PC-9 (cell line): ENCODE measurements at regions of chr1 and their contacts with region 1.

Region 1: DNA sequence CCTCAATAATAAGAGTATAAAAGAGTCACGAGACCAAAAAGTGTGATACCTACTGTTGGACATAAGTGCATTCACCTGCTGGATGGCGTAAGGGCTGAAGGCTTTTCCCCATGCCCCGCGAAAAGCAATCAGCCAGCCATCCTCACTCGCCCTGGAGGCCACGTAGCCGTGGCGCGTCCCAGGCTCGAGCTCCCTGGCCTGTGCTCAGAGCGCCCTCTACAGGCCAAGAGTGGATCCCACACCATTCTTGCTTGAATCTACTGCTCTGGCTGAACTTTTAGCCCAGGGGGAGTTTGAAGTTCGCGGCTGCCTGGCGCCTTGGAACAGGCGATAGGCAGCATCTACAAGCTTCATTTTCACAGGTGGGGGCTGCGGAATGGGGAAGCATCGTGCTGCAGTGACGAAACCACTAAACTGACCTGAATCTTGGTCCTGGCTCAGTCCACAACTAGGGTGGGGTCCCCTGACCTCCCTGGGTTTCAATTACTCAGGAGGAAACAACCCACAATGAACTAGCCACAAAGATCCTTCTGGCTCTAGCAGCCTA is 70.3 kb upstream of the SERBP1 start:
- DNase-seq: peak; percentile 74 to 89
- H3K4me3 ChIP-seq: no peak overlapping the region; the same call in 1 of the 2 replicates
- H3K27ac ChIP-seq: no peak overlapping the region
- H3K4me1 ChIP-seq: no peaks in the 10 kb centered on the region
- H3K27me3 ChIP-seq: no peaks in the 10 kb centered on the region
- CTCF ChIP-seq: peak; percentile 96

Region 2: DNA sequence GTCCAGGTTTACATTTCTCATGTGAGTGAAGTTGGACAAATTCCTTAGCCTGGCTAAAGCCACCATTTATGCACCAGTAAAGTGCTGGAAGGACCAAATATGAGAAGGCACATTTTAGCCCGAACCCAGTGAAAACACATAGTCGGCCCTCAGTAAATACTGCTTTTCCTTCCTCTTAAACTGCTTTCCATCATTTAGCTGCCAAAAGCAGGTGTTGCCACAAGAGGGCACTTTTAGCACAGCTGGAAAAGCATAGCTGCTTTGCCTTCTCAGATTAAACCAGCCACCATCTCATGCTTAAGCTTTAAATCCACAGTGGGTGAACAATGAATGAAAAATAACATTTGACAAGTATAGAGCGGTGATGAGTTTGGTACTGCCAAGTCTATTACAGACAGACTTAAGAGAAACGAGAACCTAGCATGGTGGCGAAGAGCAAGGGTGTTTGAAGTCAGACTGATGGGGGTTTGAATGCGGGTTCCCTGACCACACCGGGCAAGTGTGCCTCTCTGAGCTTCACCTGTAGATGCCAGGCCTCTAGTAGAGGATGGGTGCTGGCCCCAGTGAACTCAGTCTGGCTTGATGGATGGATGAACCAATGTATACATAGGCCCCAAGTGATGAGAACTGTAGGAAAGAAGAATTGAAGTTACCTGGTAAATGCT is 504.3 kb before region 1 on chr1:
- CTCF ChIA-PET with region 1: interaction called, 6 read pairs
- POLR2A ChIA-PET with region 1: no interaction called
- intact Hi-C with region 1: loop called (anchors 1 kb)
- DNase-seq: peak; percentile 49 to 53
- H3K4me3 ChIP-seq: no peak overlapping the region
- H3K27ac ChIP-seq: no peak overlapping the region
- H3K4me1 ChIP-seq: no peaks in the 10 kb centered on the region
- H3K27me3 ChIP-seq: no peaks in the 10 kb centered on the region
- CTCF ChIP-seq: peak; percentile 83

Region 3: DNA sequence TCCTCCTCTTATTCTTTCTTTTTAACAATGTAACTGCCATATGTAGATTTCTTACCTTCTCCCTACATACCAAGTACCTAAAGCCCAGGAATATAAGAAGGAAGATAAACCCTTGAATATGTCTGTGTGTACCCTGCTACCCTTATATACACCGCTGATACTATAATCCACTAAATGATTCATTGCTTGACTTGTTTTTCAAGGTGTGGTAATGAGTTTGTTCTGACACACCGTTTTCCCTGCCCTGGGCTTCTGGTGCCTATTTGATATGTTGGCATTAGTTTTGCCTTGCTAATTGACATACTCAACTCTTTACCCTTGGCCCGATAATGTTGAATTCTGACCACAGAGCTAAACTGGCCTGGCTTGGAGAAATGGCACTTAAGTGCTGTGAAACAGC is 269.9 kb before region 1 on chr1:
- CTCF ChIA-PET with region 1: interaction called, 3 read pairs
- POLR2A ChIA-PET with region 1: no interaction called
- intact Hi-C with region 1: loop called (anchors 1 kb)
- DNase-seq: peak; percentile 6 to 84
- H3K4me3 ChIP-seq: no peak overlapping the region
- H3K27ac ChIP-seq: peak overlapping the region; percentile 45
- H3K4me1 ChIP-seq: peaks cover 27% of the 10 kb centered on the region
- H3K27me3 ChIP-seq: no peaks in the 10 kb centered on the region
- CTCF ChIP-seq: no peak

Region 4: GRCh38 chr1:67390041-67390887 is 110.2 kb before region 1 on chr1:
- CTCF ChIA-PET with region 1: no interaction called
- POLR2A ChIA-PET with region 1: interaction called, 17 read pairs
- intact Hi-C with region 1: no loop called
- DNase-seq: peak; percentile 41 to 86
- H3K4me3 ChIP-seq: no peak overlapping the region
- H3K27ac ChIP-seq: peak overlapping the region; percentile 62
- H3K4me1 ChIP-seq: peaks cover 23% of the 10 kb centered on the region
- H3K27me3 ChIP-seq: no peaks in the 10 kb centered on the region
- CTCF ChIP-seq: no peak